ENCODE measurements at regions of chr9 and their contacts with region 1.

Region 1: DNA sequence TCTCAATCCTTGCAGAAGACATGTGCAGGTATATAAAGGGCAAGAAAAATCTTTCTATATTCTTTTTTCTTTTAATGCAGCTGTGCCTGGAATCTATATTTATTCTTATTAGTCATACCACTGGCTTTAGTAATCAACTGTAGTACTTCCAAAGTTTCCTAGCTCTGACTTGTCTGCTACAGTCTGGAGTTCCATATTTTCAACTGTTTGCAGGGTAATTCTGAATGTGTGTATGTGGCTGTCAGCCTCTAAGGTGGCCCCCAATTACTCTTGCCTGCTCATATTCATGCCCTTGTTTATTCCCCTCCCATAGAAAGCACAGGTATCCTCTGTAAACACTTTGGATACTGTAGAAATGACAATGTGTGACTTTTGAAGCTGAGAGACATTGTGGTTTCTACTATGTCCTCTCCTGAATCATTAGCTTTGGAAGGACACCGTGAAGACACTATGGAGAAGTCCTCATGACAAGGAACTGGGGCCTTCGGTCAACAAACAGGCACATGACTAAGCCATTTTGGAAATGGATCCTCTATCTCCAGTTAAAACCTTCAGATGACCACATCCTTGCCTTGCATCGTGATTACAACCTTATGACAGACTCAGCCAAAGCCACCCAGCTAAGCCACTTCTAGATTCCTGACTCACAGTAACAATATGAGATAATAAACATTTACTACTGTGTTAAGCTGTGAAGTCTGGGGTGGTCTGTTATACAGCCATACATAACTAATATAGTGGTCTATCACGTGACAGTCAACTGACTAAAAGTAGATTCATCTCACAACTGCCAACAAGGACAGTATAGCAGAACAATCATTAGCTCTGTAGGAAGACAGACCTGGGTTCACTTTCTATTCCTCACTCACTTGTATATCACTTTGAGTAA is 49.5 kb upstream of the SUSD1 start:
- DNase-seq: no peak
- H3K4me3 ChIP-seq: no peak overlapping the region
- H3K4me3 Mint-ChIP-seq: no peak overlapping the region
- H3K27ac ChIP-seq: no peak overlapping the region
- H3K27ac Mint-ChIP-seq: peak overlapping the region in 6 of 7 donors; percentile 13 to 88 (median 34)
- H3K4me1 ChIP-seq: no peaks in the 10 kb centered on the region
- H3K4me1 Mint-ChIP-seq: peaks cover 8 to 15% (median 12%) of the 10 kb centered on the region in 4 donors
- H3K27me3 ChIP-seq: no peaks in the 10 kb centered on the region
- H3K27me3 Mint-ChIP-seq: no peaks in the 10 kb centered on the region

Region 2: DNA sequence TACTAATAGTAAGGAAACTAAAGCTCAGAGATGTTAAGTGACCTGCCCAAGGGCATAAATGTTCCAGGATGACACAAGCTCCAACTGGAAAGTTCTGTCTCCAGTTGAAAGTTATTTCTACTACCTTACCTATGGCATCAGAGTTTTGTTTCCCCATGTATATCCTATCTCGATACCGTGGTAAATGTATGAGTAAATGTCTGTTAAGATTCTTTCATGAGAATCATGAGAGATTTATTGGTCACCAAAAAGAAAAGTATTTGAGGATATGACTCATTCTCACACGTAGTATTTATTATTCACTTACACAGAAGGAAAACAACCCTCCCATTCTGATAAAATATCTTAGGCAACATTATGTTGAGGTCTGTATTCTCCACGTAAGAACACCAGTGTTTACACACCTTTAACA is 418.8 kb before region 1 on chr9:
- CTCF ChIA-PET with region 1: no interaction called
- POLR2A ChIA-PET with region 1: no interaction called
- intact Hi-C with region 1: no loop called
- DNase-seq: no peak
- H3K4me3 ChIP-seq: no peak overlapping the region
- H3K4me3 Mint-ChIP-seq: no peak overlapping the region
- H3K27ac ChIP-seq: no peak overlapping the region
- H3K27ac Mint-ChIP-seq: no peak overlapping the region
- H3K4me1 ChIP-seq: no peaks in the 10 kb centered on the region
- H3K4me1 Mint-ChIP-seq: peaks cover 11 to 22% (median 16%) of the 10 kb centered on the region in 4 donors
- H3K27me3 ChIP-seq: no peaks in the 10 kb centered on the region
- H3K27me3 Mint-ChIP-seq: peaks cover 0 to 2% of the 10 kb centered on the region in 2 donors

Region 3: GRCh38 chr9:112174218-112174964 is 50.3 kb before region 1 on chr9:
- CTCF ChIA-PET with region 1: interaction called, 6 read pairs
- POLR2A ChIA-PET with region 1: interaction called, 4 read pairs
- intact Hi-C with region 1: loop called (anchors 2 kb)
- DNase-seq: peak; percentile 75 to 83 (median 80)
- H3K4me3 ChIP-seq: peak overlapping the region; percentile 54 to 68
- H3K4me3 Mint-ChIP-seq: peak overlapping the region; percentile 88 to 96 (median 91)
- H3K27ac ChIP-seq: peak overlapping the region; percentile 19
- H3K27ac Mint-ChIP-seq: peak overlapping the region; percentile 82 to 97 (median 95)
- H3K4me1 ChIP-seq: peaks cover 64% of the 10 kb centered on the region
- H3K4me1 Mint-ChIP-seq: peaks cover 49 to 88% (median 69%) of the 10 kb centered on the region in 4 donors
- H3K27me3 ChIP-seq: no peaks in the 10 kb centered on the region
- H3K27me3 Mint-ChIP-seq: no peaks in the 10 kb centered on the region

Region 4: DNA sequence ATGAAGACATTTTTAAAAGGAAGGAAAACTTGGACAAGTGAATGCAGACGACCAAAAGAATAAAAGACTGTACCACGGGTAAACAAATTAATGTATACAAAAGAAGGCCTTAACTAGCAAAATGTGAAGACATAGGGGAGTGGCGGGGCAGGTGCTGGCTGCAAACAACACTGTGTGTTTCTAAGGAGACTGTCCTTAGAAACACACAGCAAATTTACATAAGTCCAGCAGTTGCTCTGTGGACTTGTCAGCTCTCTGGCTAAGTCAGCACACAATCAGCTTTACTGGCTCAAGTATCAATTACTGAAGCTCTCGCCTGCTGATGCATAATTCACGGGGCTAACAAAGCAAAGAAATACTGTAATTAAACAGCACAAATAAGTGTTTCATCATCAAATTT is 83.9 kb after region 1 on chr9:
- CTCF ChIA-PET with region 1: no interaction called
- POLR2A ChIA-PET with region 1: no interaction called
- intact Hi-C with region 1: no loop called
- DNase-seq: no peak
- H3K4me3 ChIP-seq: no peak overlapping the region
- H3K4me3 Mint-ChIP-seq: peak overlapping the region in 2 of 8 donors; percentile 25 to 56
- H3K27ac ChIP-seq: no peak overlapping the region
- H3K27ac Mint-ChIP-seq: no peak overlapping the region
- H3K4me1 ChIP-seq: peaks cover 55% of the 10 kb centered on the region
- H3K4me1 Mint-ChIP-seq: peaks cover 24 to 69% (median 43%) of the 10 kb centered on the region in 4 donors
- H3K27me3 ChIP-seq: no peaks in the 10 kb centered on the region
- H3K27me3 Mint-ChIP-seq: no peaks in the 10 kb centered on the region

Measured in CD4-positive, alpha-beta memory T cell (primary cell).